GM10248 (cell line): ENCODE measurements at regions of chr6 and their contacts with region 1.

Region 1: GRCh38 chr6:133973109-133973971 is 20.3 kb downstream of the TBPL1 start:
- DNase-seq: peak; percentile 44
- CTCF ChIP-seq: peak; percentile 63

Region 2: DNA sequence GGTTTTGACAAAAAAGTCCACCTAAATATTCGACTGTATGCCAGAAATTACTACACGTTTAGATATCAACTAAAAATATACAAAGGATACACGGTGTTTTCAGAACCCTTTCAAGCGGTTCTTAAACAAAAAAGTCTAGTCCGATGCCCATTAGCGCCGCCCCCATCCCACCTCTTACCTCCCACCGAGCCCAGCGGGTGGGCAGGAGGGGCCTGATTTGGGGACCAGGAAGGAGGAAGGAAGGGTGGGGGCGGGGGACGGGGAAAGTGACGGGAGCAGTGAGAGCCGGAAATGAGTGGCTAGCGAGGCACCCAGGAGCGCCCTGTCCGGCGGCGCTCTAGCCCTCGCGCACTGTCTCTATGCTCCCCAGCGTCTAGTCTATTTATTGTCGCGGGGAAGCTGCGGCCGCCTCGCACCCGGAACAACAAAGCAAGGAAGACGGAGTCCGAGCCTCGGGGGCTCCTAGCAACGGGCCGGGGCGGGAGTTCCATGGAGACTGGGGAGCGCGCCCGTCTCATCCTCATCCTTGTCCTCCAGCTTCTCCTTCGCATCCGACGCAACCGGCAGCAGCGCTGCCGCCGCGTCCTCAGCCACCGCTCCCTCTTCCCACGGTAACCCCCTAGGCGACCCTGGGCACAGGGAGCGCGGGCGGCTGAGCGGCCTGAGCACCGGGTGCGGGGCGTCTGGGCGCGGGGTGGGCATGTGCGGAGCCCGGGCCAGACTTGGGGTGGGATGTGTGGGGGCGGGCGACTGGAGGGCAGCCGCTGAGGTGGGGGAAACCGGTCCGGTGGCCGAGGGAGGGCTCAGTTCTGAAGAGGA is 20.3 kb before region 1 on chr6 and contains the start of gene TBPL1:
- CTCF ChIA-PET with region 1: interaction called, 18 read pairs
- POLR2A ChIA-PET with region 1: no interaction called
- DNase-seq: peak; percentile 92
- CTCF ChIP-seq: no peak

Region 3: DNA sequence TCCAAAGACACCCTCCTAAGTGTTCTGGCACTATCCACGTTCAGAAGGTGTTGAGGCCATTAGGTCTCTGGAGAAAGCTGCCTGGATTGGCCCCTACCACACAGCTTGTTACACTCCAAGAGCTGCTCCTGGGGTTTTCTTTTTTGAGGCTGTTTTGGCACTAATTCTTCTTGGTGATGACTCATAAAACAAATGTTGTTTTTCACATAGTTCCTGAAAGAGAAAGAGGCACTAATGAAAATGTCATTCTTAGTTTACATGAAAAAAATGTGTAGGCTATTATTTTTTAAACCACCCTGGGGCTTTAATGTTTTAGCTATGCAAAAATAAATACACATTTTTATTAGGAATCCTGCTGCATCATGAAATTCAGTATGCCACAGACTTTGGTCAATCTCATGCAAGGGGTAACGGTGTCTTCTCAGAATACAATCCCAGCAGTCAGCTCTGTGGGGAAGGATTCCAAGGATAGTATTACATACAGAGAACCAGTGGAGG is 17.8 kb after region 1 on chr6:
- CTCF ChIA-PET with region 1: interaction called, 14 read pairs
- POLR2A ChIA-PET with region 1: no interaction called
- DNase-seq: no peak
- CTCF ChIP-seq: no peak

Region 4: DNA sequence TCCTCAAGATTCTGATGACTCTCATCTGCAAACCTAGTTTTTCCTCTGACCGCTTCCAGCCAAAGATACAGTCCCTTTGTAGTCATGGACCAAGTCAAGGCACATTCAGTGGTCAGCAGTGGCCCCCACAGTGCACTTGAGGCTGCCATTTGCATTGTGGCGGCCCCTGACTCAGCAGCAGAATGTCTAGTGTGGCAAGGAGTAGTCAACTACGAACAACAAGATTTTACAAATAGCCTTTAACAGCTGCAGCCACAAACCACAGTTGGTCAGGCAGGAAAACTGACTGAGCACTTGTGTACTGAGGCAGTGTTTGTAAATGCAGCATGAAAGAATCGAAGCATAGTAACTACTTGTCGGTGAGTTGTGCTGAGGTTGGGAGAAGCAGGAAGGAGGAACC is 29.5 kb after region 1 on chr6:
- CTCF ChIA-PET with region 1: interaction called, 15 read pairs
- POLR2A ChIA-PET with region 1: no interaction called
- DNase-seq: no peak
- CTCF ChIP-seq: no peak

Region 5: DNA sequence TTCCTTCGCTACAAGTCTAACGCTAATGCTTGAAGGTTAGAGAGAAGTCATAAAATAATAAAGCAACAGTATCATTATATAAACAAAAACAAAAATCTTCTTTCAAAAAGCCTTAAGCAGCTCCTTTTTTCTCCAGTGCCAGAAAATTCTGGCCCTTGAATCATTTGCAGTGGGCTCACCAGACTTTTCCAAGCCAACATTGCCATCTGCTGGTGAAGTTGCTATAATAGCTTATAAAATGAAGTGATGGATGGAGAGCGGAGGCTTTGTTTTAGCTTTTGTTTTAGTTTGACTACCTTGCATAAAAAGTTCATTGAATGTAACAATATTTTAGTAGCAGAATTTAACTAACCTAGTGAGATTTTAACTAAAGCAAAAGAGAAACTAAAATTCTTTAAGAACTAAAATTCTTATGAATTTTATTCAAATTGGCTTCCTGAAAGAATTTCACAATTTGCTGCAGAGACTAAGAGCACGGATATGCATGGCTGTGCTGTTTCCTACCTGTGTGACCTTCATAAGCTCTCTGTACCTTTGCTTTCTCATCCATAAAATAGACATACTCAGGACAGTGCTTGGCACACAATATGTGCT is 123.9 kb after region 1 on chr6:
- CTCF ChIA-PET with region 1: interaction called, 25 read pairs
- POLR2A ChIA-PET with region 1: no interaction called
- DNase-seq: peak; percentile 62
- CTCF ChIP-seq: peak; percentile 55